Activated T-helper 1 cell treated with anti-CD3 and anti-CD28 coated beads, Interleukin-12 subunit alpha, Interleukin-12 subunit beta, Interleukin-2, Interleukin-4 antibody, amounts not matched to agents 30 ng/mL and 10 ng/mL and 1 ng/mL, durations not matched to agents 14 hours and 24 hours and 36 hours (primary cell): ENCODE measurements at regions of chr1 and their contacts with region 1.

Region 1: GRCh38 chr1:153922972-153923925 is at the start of gene GATAD2B:
- DNase-seq: peak; percentile 99
- H3K4me3 Mint-ChIP-seq: peak within 1 kb of the TSS; percentile 97
- H3K27ac Mint-ChIP-seq: peak within 1 kb of the TSS; percentile 92
- H3K4me1 Mint-ChIP-seq: peaks cover 53% of the 10 kb centered on the region
- H3K27me3 Mint-ChIP-seq: peaks cover 2% of the 10 kb centered on the region
- total RNA-seq, gene GATAD2B: 69.1 and 70.4 TPM in 2 replicates

Region 2: GRCh38 chr1:152679459-152679858 is 1243.8 kb before region 1 on chr1:
- intact Hi-C with region 1: no loop called
- DNase-seq: no peak
- H3K4me3 Mint-ChIP-seq: no peak overlapping the region
- H3K27ac Mint-ChIP-seq: no peak overlapping the region
- H3K4me1 Mint-ChIP-seq: no peaks in the 10 kb centered on the region
- H3K27me3 Mint-ChIP-seq: no peaks in the 10 kb centered on the region

Region 3: GRCh38 chr1:153796791-153797659 is 126.2 kb before region 1 on chr1:
- intact Hi-C with region 1: loop called (anchors 2 kb)
- DNase-seq: peak; percentile 69
- H3K4me3 Mint-ChIP-seq: no peak overlapping the region
- H3K27ac Mint-ChIP-seq: peak overlapping the region; percentile 31
- H3K4me1 Mint-ChIP-seq: peaks cover 17% of the 10 kb centered on the region
- H3K27me3 Mint-ChIP-seq: no peaks in the 10 kb centered on the region

Region 4: DNA sequence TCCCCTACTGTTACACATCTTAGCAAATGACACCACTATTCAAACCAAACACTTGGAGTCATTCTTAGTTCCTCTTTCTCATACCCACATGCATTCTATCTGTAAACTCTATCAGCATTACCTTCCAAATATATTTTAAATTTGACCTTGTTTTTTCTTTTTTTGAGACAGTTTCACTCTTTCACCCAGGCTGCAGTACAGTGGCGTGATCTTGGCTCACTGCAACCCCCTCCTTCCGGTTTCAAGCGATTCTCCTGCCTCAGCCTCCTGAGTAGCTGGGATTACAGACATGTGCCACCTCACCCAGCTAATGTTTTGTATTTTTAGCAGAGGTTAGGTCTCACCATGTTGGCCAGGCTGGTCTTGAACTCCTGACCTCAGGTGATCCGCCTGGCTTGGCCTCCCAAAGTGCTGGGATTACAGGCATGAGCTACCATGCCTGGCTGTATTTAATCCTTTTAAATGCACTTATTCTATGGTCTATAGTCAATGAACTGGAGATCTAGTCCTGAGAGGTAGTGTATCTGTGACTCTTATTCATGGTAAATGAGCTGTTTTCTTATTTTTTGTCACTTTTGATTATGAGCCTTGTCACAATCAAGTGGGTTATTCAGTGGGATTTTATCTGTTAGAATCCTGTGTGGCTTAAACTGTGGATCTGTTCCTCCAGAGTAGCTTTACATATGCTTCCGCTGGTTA is 73.6 kb before region 1 on chr1:
- intact Hi-C with region 1: loop called (anchors 2 kb)
- DNase-seq: no peak
- H3K4me3 Mint-ChIP-seq: peak overlapping the region; percentile 5
- H3K27ac Mint-ChIP-seq: peak overlapping the region; percentile 66
- H3K4me1 Mint-ChIP-seq: peaks cover 25% of the 10 kb centered on the region
- H3K27me3 Mint-ChIP-seq: no peaks in the 10 kb centered on the region

Region 5: GRCh38 chr1:153946622-153947241 is 23.5 kb after region 1 on chr1 and contains the start of gene DENND4B:
- intact Hi-C with region 1: loop called (anchors 1 kb)
- DNase-seq: peak; percentile 74
- H3K4me3 Mint-ChIP-seq: peak within 1 kb of the TSS; percentile 88
- H3K27ac Mint-ChIP-seq: peak within 1 kb of the TSS; percentile 97
- H3K4me1 Mint-ChIP-seq: peaks cover 35% of the 10 kb centered on the region
- H3K27me3 Mint-ChIP-seq: no peaks in the 10 kb centered on the region
- total RNA-seq, gene DENND4B: 128 and 133 TPM in 2 replicates

Region 6: GRCh38 chr1:153967082-153968000 is 44.1 kb after region 1 on chr1 and contains the start of gene CREB3L4:
- intact Hi-C with region 1: loop called (anchors 1 kb)
- DNase-seq: peak; percentile 80
- H3K4me3 Mint-ChIP-seq: peak within 1 kb of the TSS; percentile 97
- H3K27ac Mint-ChIP-seq: peak within 1 kb of the TSS; percentile 95
- H3K4me1 Mint-ChIP-seq: peaks cover 52% of the 10 kb centered on the region
- H3K27me3 Mint-ChIP-seq: no peaks in the 10 kb centered on the region
- total RNA-seq, gene CREB3L4: 8.1 and 9.8 TPM in 2 replicates

Region 7: GRCh38 chr1:154157520-154158306 is 234.5 kb after region 1 on chr1:
- intact Hi-C with region 1: loop called (anchors 2 kb)
- DNase-seq: peak; percentile 79
- H3K4me3 Mint-ChIP-seq: peak overlapping the region; percentile 62
- H3K27ac Mint-ChIP-seq: peak overlapping the region; percentile 70
- H3K4me1 Mint-ChIP-seq: peaks cover 65% of the 10 kb centered on the region
- H3K27me3 Mint-ChIP-seq: no peaks in the 10 kb centered on the region

Region 8: DNA sequence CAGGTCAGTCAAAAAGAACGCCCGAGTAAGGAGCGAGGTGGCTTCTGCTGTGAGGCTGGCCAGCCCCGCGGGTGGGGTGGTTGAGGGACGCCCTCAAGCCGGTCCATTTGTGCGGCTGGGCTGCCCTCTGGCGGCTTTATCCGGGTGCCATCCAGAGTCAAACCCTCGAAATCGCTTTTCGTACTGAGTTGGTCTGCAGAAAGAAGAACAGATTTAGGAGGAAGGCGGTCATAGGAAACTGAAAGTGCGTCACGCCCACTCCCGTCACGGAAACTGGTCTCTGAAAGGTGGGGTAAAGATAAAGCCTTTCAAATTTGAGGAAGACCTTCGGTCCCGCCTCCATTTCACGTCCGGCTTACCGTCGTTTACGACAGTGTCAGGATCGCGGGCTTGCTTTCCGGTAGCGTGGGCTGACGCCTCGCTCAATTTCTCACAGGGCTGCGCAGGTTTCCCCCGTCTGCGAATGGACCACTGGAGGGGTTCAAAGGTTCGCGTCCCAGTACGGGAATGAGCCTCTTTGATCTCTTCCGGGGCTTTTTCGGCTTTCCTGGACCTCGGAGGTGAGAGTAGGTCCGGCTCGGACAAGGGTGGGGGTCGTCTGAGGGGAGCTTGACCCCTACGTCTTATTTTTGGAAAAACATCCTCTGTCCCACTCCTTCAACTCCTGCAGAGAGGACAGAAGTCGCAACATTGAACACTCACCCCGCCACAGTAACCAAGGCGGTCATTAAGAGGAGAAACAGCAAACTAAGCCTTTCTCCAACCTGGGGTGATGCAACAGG is 349.2 kb after region 1 on chr1 and contains the start of gene HAX1:
- intact Hi-C with region 1: loop called (anchors 2 kb)
- DNase-seq: peak; percentile 94
- H3K4me3 Mint-ChIP-seq: peak within 1 kb of the TSS; percentile 98
- H3K27ac Mint-ChIP-seq: peak within 1 kb of the TSS; percentile 97
- H3K4me1 Mint-ChIP-seq: peaks cover 46% of the 10 kb centered on the region
- H3K27me3 Mint-ChIP-seq: no peaks in the 10 kb centered on the region
- total RNA-seq, gene HAX1: 122 and 123 TPM in 2 replicates